Sciatic nerve (tissue), 2 donors: ENCODE measurements at regions of chr7 and their contacts with region 1.

Region 1: GRCh38 chr7:80526472-80526871 is 14.6 kb upstream of the GNAT3 start:
- DNase-seq: no peak
- ATAC-seq: no peak

Region 2: GRCh38 chr7:79876848-79877252 is 649.6 kb before region 1 on chr7:
- intact Hi-C with region 1: no loop called
- DNase-seq: no peak
- ATAC-seq: no peak

Region 3: DNA sequence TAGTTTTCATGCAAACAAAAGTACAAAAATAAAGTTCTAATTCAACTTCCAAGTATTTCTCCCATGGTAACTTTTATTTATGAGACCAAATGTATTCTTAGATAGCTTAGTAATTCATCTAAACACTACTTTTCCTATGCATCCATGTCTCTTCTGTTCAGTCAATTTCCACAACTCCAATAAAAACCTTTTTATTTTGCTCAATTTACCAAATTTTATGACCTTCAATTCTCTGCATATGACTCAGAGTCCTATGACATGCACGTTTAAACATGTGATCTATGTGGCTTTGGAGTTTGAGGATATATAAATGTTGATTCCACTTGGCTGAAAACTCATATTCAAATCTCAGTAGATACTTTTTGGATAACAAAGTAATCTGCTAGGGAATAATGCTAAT is 25.8 kb after region 1 on chr7:
- intact Hi-C with region 1: loop called (anchors 1 kb)
- DNase-seq: no peak
- ATAC-seq: no peak

Region 4: DNA sequence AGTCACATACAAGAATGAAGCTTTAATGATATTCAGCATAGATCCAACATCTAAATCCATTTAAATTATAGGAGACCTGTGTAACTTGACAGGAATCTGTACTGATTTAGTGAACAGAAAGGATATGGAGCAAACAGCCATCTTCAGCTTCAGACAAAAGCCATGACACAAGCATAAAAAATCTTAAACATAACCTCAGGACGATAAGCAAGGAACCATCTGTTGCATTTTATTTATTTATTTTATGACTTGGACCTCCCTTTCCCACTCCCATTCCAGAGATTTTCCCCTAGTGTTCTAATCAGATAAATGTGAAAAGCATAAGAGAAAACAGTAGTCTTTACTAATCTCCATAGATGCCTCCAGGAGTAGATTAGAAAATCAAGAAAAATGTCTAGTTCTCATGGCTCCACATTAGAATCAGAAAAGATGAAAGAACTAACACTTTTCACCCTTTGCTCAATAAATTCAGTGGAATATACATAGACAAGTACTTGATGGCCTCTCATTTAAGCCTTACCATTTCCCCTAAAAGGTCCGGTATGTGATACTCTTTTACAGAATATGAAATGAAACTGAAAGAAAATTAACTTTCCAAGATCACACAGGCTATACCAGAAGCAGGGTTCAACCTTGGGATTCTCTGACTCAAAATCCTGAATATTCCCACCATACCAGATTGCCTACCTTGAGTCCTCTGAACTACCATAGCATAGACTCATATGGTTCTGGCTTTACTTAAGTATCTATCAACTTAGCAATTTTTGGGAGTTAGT is 1901.9 kb after region 1 on chr7:
- intact Hi-C with region 1: no loop called
- DNase-seq: no peak
- ATAC-seq: no peak